Activated naive CD4-positive, alpha-beta T cell treated with anti-CD3 and anti-CD28 coated beads, Interleukin-2, amount 10 ng/mL, durations not matched to agents 7 days and 5 days (primary cell): ENCODE measurements at regions of chr7 and their contacts with region 1.

Region 1: DNA sequence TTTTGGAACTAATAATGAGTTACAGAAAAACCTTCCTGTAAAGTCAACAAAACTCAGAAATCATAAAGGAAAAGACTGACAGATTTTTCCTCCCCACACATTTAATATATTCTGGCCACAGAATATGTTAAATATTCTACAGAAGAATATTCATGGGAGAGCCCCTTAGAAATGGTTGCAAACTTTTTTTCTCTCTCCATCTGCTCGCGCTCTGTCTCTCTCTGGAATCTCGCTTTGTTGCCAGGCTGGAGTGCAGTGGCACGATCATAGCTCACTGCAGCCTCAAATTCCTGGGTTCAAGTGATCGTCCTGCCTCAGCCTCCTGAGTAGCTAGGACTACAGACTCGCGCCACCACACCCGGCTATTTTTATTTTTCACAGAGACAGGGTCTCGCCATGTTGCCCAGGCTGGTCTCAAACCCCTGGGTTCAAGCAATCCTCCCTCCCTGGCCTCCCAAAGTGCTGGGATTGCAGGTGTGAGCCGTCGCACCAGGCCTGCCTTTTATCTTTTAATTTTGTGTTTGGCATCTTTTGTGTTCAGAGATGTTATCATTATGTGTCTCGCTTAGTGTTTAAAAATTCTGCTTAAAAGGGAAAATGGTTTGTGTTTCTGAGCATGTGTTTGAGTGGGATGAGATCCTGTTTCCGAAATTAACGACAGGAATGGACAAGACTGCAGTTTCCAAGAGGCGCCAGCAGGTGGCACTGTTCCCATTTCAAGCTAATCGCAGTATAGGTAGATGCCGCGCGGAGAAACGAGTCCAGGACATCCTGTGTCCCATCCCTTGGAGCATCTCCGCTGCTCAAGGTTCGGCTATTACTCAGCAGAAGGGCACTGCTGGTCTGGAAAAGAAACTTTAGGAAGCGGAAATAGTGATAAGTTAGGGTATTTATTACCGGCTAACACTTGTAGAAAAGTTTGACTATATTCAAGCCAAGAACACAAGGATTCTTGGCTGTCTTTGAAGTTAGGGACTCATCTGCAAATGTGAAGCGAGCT is 23.1 kb upstream of the ST7 start:
- DNase-seq: peak; percentile 81
- H3K4me3 Mint-ChIP-seq: no peak overlapping the region
- H3K27ac Mint-ChIP-seq: no peak overlapping the region
- H3K4me1 Mint-ChIP-seq: peaks cover 5% of the 10 kb centered on the region
- H3K27me3 Mint-ChIP-seq: peaks cover 18% of the 10 kb centered on the region

Region 2: DNA sequence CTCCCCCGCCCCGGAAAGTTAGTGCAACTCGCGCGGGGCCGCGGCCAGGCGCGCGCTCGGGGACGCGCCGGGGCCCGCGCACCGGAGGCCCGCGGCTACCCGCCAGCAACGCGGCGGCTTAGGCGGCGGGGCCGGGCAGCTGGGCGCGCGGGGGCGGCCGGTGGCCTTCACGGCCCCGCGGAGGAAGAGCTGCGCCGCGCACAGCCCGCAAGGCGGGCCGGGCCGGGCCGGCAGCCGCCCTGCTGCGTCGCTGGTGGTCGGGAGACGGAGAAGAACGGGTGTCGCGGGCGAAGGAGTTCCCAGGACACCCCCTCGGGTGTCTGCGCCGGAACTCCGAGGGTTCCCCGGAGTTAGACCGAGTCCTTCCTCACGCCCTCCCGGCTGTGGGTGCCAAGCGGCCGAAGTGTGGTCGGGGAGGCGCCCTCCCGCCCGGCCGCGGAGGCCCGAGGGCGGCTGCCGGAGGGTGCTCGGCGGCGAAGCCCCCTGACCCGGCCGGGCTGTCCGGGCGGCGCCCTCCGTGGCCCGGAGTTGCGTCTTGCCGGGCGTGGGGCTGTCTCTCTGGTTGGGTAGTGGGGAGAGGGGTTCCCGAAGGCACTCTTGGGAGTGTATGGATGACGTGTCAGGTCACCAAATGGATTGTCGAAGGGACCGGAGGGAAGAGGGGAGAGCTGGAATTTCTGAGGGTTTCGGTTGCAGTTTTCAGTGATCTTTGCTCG is 23.7 kb after region 1 on chr7:
- CTCF ChIA-PET with region 1: interaction called, 12 read pairs
- DNase-seq: peak; percentile 44
- H3K4me3 Mint-ChIP-seq: peak overlapping the region; percentile 84
- H3K27ac Mint-ChIP-seq: peak overlapping the region; percentile 77
- H3K4me1 Mint-ChIP-seq: peaks cover 19% of the 10 kb centered on the region
- H3K27me3 Mint-ChIP-seq: peaks cover 21% of the 10 kb centered on the region

Region 3: GRCh38 chr7:116970238-116970910 is 40.2 kb after region 1 on chr7:
- CTCF ChIA-PET with region 1: no interaction called
- DNase-seq: no peak
- H3K4me3 Mint-ChIP-seq: no peak overlapping the region
- H3K27ac Mint-ChIP-seq: no peak overlapping the region
- H3K4me1 Mint-ChIP-seq: no peaks in the 10 kb centered on the region
- H3K27me3 Mint-ChIP-seq: peaks cover 4% of the 10 kb centered on the region

Region 4: DNA sequence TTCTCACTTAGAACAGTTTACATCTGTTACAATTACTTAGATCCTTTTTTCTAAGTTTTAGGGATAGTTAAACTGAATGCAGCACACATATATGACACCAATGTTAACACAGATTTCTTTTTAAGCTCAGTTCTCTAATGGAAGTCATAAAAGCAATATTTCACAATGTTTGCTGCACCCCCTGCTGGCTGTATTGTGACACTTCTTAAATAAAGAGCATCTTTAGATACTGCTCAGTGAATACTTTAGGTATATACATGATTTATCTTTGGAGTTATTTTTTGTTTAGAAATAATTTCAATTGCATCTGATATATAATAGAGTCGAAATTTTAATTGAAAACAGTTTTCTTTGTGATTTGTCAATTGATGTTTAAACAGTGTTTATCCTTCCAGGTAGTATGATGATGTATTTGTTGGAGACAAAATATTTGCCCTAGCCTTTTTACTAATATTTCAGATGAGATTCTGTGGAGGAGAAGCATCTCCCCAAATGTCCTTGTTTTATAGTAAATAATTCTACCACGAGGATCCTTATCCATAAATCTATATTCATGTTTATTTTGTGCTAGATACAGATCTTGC is 197.5 kb after region 1 on chr7:
- CTCF ChIA-PET with region 1: interaction called, 16 read pairs
- DNase-seq: peak; percentile 68
- H3K4me3 Mint-ChIP-seq: no peak overlapping the region
- H3K27ac Mint-ChIP-seq: no peak overlapping the region
- H3K4me1 Mint-ChIP-seq: no peaks in the 10 kb centered on the region
- H3K27me3 Mint-ChIP-seq: peaks cover 3% of the 10 kb centered on the region